ENCODE measurements at regions of chrX and their contacts with region 1.

Region 1: DNA sequence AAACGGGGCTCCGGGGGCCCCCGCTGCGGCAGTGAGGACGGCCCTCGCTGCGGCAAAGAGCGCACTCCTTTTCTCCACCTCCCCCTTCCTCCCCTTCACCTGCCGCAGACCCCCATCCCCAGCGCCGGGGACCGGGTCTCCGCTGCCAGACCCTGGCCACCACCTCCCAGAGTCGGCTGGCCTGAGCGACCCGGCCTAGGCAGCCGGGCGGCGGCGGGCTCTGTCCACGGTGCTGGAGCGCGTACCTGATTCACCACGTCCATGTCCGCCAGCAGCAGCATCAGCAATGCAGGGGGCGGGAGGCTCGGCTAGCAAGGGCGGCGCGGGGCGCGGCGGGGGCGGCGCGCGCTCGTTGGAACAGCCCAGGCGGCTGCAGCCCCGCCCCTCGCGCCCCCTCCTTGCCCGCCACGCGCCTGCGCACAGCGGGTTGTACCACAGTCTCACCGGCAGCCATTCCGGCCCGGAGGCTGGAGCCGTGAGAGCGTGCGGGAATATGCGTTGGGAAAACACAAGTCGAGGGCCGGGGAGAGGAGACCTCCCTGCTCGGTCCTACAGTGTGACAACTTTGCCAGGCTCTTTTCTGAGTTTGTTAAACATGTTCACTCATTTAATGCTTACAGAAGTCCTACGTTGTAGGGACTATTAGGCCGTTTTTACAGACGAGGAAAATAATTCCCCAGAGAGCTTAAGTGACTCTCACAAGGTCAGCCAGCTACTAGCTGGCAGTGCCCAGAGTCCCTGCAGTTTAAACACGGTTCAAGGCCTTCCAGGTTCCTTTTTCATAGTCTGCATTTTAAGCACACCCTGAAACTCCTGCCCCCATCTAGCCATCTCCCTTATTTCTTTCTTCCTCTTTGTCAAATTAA is at the start of gene SYP:
- DNase-seq: peak; percentile 84
- H3K4me3 ChIP-seq: peak within 1 kb of the TSS in 1 of 3 experiments; percentile 36
- H3K27ac ChIP-seq: no peak within 1 kb of the TSS
- H3K4me1 ChIP-seq: peaks cover 3% of the 10 kb centered on the region
- H3K27me3 ChIP-seq: peaks cover 0 to 2% of the 10 kb centered on the region in 2 experiments
- CTCF ChIP-seq: no peak
- POLR2A ChIP-seq: peak; percentile 85
- total RNA-seq, gene SYP: 0.46 and 0.77 TPM in 2 replicates

Region 2: DNA sequence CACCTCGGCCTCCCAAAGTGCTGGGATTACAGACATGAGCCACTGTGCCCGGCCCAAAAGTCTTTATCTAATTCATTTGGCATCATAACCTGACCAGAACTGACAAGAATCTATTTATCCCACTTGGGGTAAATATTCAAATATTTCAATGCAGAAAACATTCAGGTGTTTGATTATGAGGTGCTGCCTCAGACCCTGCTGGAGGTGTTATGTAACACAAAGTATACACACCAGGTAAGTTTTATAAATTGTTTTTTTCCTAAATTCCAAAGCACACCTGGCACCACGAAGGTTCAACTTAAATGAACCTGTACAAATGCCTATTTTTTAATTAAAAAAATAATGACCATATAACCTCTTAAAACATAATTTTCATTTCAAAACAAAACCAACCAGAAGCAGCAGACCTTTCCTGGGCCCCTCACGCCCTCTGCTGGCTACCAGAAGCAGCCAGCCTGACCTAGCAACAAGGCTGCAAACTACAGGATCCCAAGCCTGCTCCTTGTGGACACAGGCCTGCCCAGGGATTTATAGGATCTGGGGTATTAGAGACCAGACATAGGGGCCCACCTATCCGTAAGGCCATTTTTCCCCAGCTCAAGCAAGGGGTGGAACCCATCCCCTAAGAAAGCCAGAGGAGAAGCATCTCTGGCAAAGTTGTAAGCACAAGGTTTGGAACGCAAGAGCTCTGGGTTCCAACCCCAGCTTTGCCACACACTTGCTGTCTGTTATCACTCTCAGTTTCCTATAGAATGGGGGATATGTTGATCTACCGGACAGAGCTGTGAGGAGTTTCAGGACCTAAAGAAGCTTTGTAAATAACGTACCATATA is 254.4 kb before region 1 on chrX:
- CTCF ChIA-PET with region 1: no interaction called
- POLR2A ChIA-PET with region 1: no interaction called
- dilution Hi-C with region 1: no loop called
- intact Hi-C with region 1: no loop called
- DNase-seq: peak; percentile 32
- H3K4me3 ChIP-seq: no peak overlapping the region
- H3K27ac ChIP-seq: no peak overlapping the region
- H3K4me1 ChIP-seq: no peaks in the 10 kb centered on the region
- H3K27me3 ChIP-seq: no peaks in the 10 kb centered on the region
- CTCF ChIP-seq: peak; percentile 61 to 69
- POLR2A ChIP-seq: no peak

Region 3: GRCh38 chrX:49043220-49043986 is 156.7 kb before region 1 on chrX and contains the start of gene TFE3:
- CTCF ChIA-PET with region 1: no interaction called
- POLR2A ChIA-PET with region 1: no interaction called
- dilution Hi-C with region 1: no loop called
- intact Hi-C with region 1: no loop called
- DNase-seq: peak; percentile 99
- H3K4me3 ChIP-seq: peak within 1 kb of the TSS; percentile 66 to 86 (median 70)
- H3K27ac ChIP-seq: peak within 1 kb of the TSS; percentile 86
- H3K4me1 ChIP-seq: peaks cover 33% of the 10 kb centered on the region
- H3K27me3 ChIP-seq: no peaks in the 10 kb centered on the region
- CTCF ChIP-seq: peak; percentile 59
- POLR2A ChIP-seq: peak; percentile 41
- total RNA-seq, gene TFE3: 35.5 and 37.1 TPM in 2 replicates

Region 4: DNA sequence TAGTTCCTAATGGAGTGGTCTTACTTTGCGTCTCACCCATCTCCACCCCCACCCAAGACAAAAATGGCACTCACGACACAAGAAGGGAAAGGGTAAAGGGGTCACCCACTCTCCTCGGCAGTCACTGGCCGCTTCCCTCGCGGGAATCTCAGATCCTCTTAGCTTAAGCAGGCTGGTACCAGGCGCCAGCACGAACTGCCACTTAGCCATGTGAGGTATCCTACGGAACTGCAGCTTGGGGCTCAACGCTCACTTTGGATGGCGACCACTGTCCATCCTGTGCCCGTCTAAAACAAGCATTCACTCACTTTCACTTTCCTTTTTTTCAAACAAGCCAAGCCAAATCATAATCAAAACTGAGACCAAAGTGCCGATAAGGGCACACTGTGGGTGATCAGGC is 52.2 kb before region 1 on chrX:
- CTCF ChIA-PET with region 1: no interaction called
- POLR2A ChIA-PET with region 1: no interaction called
- dilution Hi-C with region 1: no loop called
- intact Hi-C with region 1: no loop called
- DNase-seq: no peak
- H3K4me3 ChIP-seq: no peak overlapping the region
- H3K27ac ChIP-seq: no peak overlapping the region
- H3K4me1 ChIP-seq: no peaks in the 10 kb centered on the region
- H3K27me3 ChIP-seq: no peaks in the 10 kb centered on the region
- CTCF ChIP-seq: no peak
- POLR2A ChIP-seq: no peak

Region 5: DNA sequence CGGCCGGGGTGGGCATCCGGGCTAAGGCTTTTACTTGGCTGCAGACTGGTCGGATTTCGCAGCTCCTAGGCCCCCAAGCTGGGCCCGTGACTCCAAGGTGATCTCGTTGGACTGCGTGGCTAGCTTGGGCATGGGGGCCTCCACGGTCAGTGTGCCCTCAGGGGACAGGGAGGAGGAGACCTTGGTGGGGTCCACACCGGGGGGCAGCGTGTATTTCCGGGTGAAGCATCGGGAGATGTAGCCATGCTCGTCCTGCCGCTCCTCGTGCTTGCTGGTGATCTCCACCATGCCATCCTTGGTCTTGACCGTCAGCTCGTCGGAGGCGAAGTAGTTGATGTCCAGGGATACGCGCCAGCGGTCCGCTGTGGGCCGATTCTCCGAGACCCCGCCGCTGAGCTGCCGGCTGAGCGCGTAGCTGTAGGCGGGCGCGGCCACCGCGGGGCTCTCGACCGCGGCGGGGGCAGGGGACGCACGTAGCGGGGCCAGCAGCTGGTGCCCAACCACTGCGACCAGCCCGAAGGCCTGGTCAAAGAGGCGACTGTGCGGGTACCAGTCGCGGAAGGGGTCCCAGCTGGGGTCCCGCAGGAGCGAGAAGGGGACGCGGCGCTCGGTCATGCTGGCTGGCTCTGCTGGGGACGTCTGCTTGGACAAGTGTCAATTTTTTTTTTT is 33.9 kb after region 1 on chrX:
- CTCF ChIA-PET with region 1: no interaction called
- POLR2A ChIA-PET with region 1: no interaction called
- dilution Hi-C with region 1: no loop called
- intact Hi-C with region 1: loop called (anchors 2 kb)
- DNase-seq: no peak
- H3K4me3 ChIP-seq: no peak overlapping the region
- H3K27ac ChIP-seq: no peak overlapping the region
- H3K4me1 ChIP-seq: peaks cover 2% of the 10 kb centered on the region
- H3K27me3 ChIP-seq: no peaks in the 10 kb centered on the region
- CTCF ChIP-seq: no peak
- POLR2A ChIP-seq: no peak